BJ (cell line): ENCODE measurements at regions of chr5 and their contacts with region 1.

Region 1: GRCh38 chr5:68170826-68171558 is 44.6 kb upstream of the PIK3R1 start:
- DNase-seq: peak; percentile 2
- H3K4me3 ChIP-seq: no peak overlapping the region
- H3K27me3 ChIP-seq: no peaks in the 10 kb centered on the region
- CTCF ChIP-seq: no peak

Region 2: DNA sequence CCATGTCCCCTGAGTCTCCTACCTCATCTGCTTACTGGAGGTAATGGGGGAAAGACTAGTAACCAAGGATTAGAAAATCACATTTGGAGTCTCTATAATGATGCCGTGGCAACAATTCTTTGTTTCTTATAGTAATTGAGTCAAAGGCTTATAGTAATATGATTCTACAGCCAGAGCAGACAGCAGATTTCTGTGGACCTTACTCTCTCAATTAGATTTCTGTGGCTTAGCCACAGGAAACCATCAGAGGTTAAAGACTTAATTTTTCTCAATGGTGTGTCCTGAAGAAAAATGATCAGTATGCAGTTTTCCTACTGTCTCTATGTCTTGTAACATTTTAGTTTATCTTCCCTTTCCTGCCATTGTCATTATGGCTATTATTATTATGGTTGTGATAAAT is 915.1 kb before region 1 on chr5:
- CTCF ChIA-PET with region 1: no interaction called
- POLR2A ChIA-PET with region 1: interaction called, 23 read pairs
- DNase-seq: peak; percentile 63
- H3K4me3 ChIP-seq: no peak overlapping the region
- H3K27me3 ChIP-seq: no peaks in the 10 kb centered on the region
- CTCF ChIP-seq: no peak

Region 3: GRCh38 chr5:68154119-68154857 is 16.7 kb before region 1 on chr5:
- CTCF ChIA-PET with region 1: no interaction called
- POLR2A ChIA-PET with region 1: no interaction called
- DNase-seq: no peak
- H3K4me3 ChIP-seq: no peak overlapping the region
- H3K27me3 ChIP-seq: no peaks in the 10 kb centered on the region
- CTCF ChIP-seq: no peak